ENCODE measurements at regions of chr5 and their contacts with region 1.

Region 1: DNA sequence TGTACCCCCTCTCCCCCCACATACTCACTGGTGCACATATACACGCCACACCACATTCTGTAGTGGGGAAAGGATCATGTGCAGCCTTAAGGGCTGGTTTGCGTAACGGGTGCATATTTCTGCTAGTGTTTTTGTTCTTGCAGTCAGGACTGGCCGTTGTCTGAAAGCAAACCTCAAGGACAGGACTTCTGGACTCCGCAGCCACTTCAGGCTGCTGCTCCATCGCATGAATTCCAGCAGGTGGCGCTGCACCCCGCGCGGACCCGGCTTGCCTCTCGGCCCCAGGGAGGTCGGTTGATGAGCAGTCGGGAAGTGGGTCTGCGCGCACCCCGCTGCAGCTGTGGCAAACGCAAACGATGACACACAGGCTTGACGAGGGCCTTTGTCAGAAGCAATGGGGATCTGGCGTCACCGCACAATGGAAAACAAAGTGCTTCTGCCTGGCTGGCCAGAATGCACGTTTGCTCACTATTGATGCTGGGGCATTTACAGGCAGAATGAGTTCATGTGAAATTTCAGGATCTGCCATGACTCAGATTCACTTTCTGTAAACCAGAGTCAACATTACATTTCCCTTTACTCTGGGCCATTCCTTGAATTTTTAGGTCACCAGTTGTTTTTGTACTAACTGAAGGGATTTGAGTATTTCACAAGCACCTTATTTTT is 36.3 kb upstream of the GLRX start:
- DNase-seq: peak; percentile 85 to 96 (median 91)
- ATAC-seq: peak; percentile 62 to 80 (median 73)
- H3K4me3 ChIP-seq: peak overlapping the region in 9 of 12 donors; percentile 18 to 46 (median 30)
- H3K27ac ChIP-seq: peak overlapping the region; percentile 82 to 97 (median 90)
- H3K4me1 ChIP-seq: peaks cover 0 to 72% (median 44%) of the 10 kb centered on the region in 12 donors
- H3K27me3 ChIP-seq: no peaks in the 10 kb centered on the region
- CTCF ChIP-seq: peak; percentile 97 to 99 (median 98)
- POLR2A ChIP-seq: peak in 1 of 2 donors; percentile 37

Region 2: DNA sequence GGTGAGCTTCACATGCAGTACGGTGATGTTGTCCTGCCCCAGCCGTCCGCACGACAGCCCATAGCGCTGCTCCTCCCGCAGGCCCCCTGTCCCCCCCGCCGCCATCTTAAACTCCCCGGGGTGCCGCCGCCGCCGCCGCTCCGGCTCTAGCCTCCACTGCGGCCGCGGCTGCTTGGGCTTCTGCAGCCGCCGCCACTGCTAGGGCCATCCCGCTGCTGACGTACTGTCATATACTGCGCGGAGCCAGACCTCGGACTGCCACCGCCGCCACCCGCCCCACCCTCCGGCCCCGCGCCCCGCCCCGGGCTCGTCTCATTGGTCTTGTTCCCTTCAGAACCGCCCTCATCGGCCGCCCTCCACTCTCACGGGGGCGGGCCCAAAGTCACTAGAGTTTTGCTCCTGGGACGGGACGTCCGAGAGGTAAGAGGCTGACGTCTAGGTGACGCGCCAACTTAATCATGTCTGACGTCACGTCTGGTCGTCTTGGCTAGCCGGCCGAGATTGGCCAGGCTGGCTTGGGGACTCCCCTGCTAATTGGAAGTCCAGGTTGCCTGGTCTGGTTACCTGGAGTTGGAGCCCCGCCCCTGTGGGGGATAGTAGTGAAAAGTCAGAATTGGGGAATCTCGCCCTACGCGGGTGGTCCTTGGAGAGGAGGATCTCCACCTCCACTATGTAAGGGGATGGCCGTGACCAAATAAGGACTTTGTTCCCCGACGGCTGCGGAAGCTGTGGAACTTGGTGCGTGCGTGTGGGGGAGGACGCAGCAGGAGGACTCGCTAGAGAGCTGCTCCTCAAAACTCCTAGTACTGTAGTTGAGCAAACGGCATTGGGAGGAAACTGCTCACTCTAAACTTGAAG is 103.1 kb after region 1 on chr5 and contains the start of gene ELL2:
- intact Hi-C with region 1: loop called (anchors 1 to 10 kb)
- DNase-seq: peak; percentile 97 to 99 (median 98)
- ATAC-seq: peak; percentile 89 to 95 (median 94)
- H3K4me3 ChIP-seq: peak within 1 kb of the TSS; percentile 70 to 97 (median 90)
- H3K27ac ChIP-seq: peak within 1 kb of the TSS; percentile 94 to 100 (median 98)
- H3K4me1 ChIP-seq: peaks cover 0 to 49% (median 23%) of the 10 kb centered on the region in 12 donors
- H3K27me3 ChIP-seq: no peaks in the 10 kb centered on the region
- CTCF ChIP-seq: no peak
- POLR2A ChIP-seq: peak; percentile 48 to 97
- total RNA-seq, gene ELL2: 15.4 to 74.5 (median 31.1) TPM

Region 3: DNA sequence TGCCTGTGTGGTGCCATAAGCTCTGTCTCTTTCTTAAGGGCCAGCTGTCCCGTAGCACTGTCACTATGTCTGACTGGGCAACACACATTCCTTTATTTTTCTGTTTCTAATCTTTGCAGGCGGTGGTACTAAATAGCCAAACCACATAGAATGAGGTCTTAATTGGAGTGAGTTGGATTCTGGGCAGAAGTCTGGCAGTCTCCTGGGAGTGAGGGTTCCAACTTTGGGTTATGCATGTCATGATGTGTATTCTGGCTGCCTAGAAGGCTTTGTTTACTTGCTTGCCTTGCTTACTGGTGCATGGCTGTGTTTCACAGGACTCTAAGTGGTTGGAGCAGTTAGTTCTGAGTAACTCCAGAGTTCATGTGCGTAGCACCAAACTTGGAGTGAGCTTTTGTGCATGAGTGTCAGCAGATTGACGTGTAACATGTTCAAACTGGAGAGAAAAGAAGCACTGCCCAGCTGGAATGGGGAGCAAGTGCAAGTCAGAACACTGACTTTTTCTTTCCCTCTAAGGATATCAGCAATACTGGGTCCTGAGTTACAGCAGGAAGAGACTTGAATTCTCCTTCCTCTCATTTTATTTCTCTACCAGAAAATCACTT is 388.4 kb after region 1 on chr5:
- intact Hi-C with region 1: loop called in 1 of 10 experiments (anchors 5 kb)
- DNase-seq: peak in 4 of 5 donors; percentile 10 to 52 (median 44)
- ATAC-seq: peak; percentile 88 to 96 (median 95)
- H3K4me3 ChIP-seq: peak overlapping the region in 1 of 12 donors; percentile 1
- H3K27ac ChIP-seq: peak overlapping the region; percentile 51 to 81 (median 74)
- H3K4me1 ChIP-seq: peaks cover 0 to 44% (median 15%) of the 10 kb centered on the region in 12 donors
- H3K27me3 ChIP-seq: no peaks in the 10 kb centered on the region
- CTCF ChIP-seq: no peak
- POLR2A ChIP-seq: no peak

Region 4: DNA sequence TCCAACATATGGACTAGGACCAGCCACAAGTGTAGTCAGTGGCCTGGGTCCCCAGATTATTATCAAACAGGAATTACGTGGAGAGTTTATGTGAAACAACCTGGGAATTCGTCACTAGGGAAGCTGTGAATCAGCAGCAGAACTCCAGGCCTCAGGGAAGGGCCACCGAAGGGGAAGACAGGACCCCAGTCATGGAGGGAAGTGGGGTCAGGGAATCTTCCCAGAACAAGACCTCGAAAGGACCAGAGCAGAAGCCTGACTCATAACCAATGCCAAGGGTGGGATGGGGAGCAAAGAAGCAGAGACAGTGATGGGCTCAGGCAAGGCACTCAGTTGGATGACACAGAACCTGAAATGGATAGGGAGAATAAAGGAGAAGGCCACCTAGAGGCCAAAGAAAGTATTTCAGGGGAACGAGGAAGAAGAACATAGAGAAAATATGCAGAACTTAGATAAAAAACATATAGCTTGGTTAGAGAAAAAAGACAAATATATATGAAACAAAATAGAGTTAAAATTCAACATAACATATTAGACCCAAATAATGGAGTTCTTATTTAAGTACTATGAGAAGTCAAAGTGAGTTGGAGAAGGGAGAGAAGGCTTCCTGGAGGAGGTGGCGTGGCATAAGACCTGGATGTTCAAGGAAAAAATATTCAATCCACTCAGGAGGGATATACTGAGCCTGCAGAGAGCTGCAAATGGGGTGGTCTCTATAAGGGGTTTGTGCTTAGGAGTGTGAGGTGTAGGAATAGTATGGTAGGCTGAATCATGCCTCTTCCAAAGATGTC is 736.7 kb after region 1 on chr5:
- intact Hi-C with region 1: loop called (anchors 5 to 10 kb)
- DNase-seq: no peak
- ATAC-seq: no peak
- H3K4me3 ChIP-seq: no peak overlapping the region
- H3K27ac ChIP-seq: no peak overlapping the region
- H3K4me1 ChIP-seq: peaks cover 0 to 6% (median 0%) of the 10 kb centered on the region in 12 donors
- H3K27me3 ChIP-seq: no peaks in the 10 kb centered on the region
- CTCF ChIP-seq: peak in 8 of 12 donors; percentile 7 to 48 (median 27)
- POLR2A ChIP-seq: no peak

Region 5: DNA sequence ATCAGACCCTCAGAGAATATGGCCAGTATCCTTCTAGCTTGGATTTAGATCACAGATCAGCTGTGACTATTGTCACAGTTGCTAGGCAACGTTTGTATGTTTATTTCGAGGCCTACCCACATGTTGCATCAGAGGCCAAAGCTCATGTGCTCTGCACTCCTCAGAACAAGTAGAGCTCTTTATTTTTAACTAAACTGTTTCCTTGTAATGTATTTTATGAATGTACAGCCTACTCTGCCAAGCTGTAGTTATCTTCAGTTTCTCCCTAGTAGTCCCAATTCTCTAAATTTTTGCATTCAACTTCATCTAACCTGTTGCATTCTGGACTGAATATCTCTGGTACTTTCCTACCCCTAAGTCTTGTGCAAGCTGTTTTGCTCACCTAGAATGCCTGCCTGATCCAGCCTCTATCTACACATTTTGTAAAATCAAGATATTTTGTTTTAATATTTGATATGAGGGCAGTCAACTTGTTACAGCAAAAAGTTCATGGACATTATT is 856.2 kb after region 1 on chr5:
- intact Hi-C with region 1: loop called in 1 of 10 experiments (anchors 5 kb)
- DNase-seq: peak in 4 of 5 donors; percentile 60 to 74 (median 68)
- ATAC-seq: peak; percentile 68 to 90 (median 84)
- H3K4me3 ChIP-seq: no peak overlapping the region
- H3K27ac ChIP-seq: peak overlapping the region; percentile 17 to 98 (median 72)
- H3K4me1 ChIP-seq: peaks cover 8 to 99% (median 71%) of the 10 kb centered on the region in 12 donors
- H3K27me3 ChIP-seq: no peaks in the 10 kb centered on the region
- CTCF ChIP-seq: no peak
- POLR2A ChIP-seq: peak in 1 of 2 donors; percentile 18